KBM-7 (cell line): ENCODE measurements at regions of chr2 and their contacts with region 1.

Region 1: DNA sequence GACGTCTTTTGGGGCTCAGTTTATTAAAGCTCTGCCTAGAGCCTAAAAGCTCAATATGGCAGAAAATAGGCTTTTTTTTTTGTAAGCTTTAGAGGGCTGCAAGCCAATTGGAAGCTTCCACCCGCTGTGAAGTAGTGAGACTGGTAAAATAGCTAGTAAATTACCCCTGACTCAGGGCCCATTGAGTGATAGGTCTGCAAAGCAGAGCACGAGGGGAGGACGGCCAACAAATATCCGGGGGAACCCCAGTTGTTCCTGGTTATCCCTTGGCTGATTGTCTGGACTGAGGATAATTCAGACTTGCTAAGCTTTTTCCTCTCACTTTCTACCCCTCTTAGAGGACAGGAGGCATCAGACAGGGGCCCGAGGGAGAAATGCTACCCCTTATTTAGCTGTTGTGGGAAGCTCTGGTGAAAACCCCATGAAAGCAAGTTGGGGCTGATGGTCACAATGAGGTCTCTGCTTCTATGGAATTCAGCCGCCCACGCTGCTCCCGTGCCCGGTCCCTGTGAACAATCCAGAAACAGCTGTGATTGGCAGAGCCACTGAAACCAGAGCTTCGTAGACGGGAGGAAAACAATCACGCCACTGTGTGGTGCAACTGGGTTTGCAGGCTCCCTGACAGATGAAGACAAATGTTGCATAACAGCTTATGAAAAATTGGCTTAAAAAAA is 141.9 kb upstream of the LGALSL start:
- DNase-seq: peak; percentile 51

Region 2: DNA sequence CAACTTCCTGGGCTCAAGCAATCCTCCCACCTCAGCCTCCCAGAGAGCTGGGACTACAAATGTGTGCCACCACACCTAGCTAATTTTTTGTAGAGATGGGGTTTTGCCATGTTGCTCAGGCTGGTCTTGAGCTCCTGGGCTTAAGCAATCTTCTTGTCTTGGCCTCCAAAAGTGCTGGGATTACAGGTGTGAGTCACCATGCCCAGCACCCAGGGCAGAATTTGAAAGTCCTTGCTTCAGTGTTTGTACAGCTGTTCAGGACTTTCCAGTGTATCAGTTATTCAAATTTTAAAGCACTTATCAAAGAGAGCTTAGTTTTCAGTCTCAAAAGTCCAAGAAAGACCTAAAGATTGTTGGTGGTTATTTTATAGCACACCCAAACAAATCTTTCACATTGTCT is 249.3 kb before region 1 on chr2:
- in situ Hi-C with region 1: loop called (anchors 25 kb)
- DNase-seq: no peak